HepG2 (cell line): ENCODE measurements at regions of chr6 and their contacts with region 1.

Region 1: GRCh38 chr6:169831450-169832246 is 80.2 kb downstream of the ERMARD start:
- DNase-seq: peak; percentile 60
- ATAC-seq: peak; percentile 95
- H3K4me3 ChIP-seq: peak overlapping the region in 1 of 3 experiments; percentile 38; a peak in 2 of 6 replicates
- H3K27ac ChIP-seq: no peak overlapping the region
- H3K4me1 ChIP-seq: peaks cover 19% of the 10 kb centered on the region
- H3K27me3 ChIP-seq: peaks cover 0 to 24% of the 10 kb centered on the region in 2 experiments; a peak in 4 of 5 replicates
- CTCF ChIP-seq: peak; percentile 100
- EP300 ChIP-seq: no peak
- POLR2A ChIP-seq: no peak
- RAD21 ChIP-seq: peak; percentile 94

Region 2: DNA sequence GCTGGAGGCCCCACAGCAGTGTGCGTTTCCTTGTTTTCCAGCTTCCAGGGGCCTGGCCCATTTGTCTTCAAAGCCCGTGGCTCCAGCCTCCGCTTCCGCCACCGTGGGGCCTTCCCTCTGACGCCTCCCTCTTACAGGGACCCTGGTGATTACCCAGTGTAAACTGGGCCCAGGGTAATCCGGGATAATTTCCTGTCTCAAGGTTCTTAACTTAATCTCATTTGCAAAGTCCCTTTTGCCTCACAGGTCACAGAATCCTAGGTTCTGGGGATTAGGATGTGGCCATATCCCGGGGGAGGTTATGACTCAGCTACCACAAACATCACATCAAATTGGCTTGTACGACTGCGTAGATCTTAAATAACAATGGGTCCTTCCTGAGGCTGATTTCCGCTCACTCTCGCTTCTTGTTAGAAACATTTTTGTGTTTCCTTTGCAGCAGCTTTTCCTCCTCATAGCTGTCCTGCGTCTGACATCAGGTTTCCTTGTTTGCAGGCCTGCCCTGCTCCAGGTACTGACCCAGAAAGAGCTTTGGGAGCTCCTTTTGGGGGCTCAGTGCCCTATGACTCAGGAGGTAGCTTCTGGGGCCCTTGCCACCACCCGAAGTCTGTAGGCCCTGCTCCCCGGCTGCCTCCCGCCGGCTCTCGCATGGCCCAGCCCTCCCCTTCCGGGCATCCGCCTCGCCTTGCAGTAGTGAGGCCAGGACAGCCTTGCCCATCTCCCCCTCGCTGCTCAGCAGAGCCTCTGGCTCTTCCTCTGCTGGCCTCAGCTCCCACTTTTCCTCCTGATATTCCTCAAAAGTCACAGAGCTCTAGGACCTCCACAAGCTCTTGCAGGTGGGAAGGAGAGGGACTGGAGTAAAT is 20.2 kb after region 1 on chr6:
- CTCF ChIA-PET with region 1: no interaction called
- POLR2A ChIA-PET with region 1: no interaction called
- in situ Hi-C with region 1: no loop called
- intact Hi-C with region 1: no loop called
- DNase-seq: no peak
- ATAC-seq: peak; percentile 55
- H3K4me3 ChIP-seq: no peak overlapping the region
- H3K27ac ChIP-seq: no peak overlapping the region
- H3K4me1 ChIP-seq: no peaks in the 10 kb centered on the region
- H3K27me3 ChIP-seq: peaks cover 11 to 48% of the 10 kb centered on the region in 2 experiments; a peak in 4 of 5 replicates
- CTCF ChIP-seq: no peak
- EP300 ChIP-seq: no peak
- POLR2A ChIP-seq: no peak
- RAD21 ChIP-seq: no peak

Region 3: GRCh38 chr6:169883316-169883715 is 51.7 kb after region 1 on chr6:
- CTCF ChIA-PET with region 1: interaction called, 4 read pairs
- POLR2A ChIA-PET with region 1: no interaction called
- in situ Hi-C with region 1: no loop called
- intact Hi-C with region 1: loop called (anchors 2 kb)
- DNase-seq: peak; percentile 20
- ATAC-seq: peak; percentile 68
- H3K4me3 ChIP-seq: no peak overlapping the region
- H3K27ac ChIP-seq: no peak overlapping the region
- H3K4me1 ChIP-seq: no peaks in the 10 kb centered on the region
- H3K27me3 ChIP-seq: peaks cover 2 to 60% of the 10 kb centered on the region in 2 experiments; a peak in 4 of 5 replicates
- CTCF ChIP-seq: peak; percentile 69
- EP300 ChIP-seq: no peak
- POLR2A ChIP-seq: no peak
- RAD21 ChIP-seq: no peak